ENCODE measurements at regions of chr16 and their contacts with region 1.

Region 1: GRCh38 chr16:10981697-10982216 is 37.4 kb downstream of the CLEC16A start:
- DNase-seq: no peak
- H3K4me3 ChIP-seq: no peak overlapping the region
- H3K27ac ChIP-seq: peak overlapping the region in 1 of 2 donors; percentile 15
- H3K4me1 ChIP-seq: peaks cover 7% of the 10 kb centered on the region
- H3K27me3 ChIP-seq: no peaks in the 10 kb centered on the region
- CTCF ChIP-seq: peak in 1 of 4 experiments; percentile 9
- POLR2A ChIP-seq: no peak

Region 2: DNA sequence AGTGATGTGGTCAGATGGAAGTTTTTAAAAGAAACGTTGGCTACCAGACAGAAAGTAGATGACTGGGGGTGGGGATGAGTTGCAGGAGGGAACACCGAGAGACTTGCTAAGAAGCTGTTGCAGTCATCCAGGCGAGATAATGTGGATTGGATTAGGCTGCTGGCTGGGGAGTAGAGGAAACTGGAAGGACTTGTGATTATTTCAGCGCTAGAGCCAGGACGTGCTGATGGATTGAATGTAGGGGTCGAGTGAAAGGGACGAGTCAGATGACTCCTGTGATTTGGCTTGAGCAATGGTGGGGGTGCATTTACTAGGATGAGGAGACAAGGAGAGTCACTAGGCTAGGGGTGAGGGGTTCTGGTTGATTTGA is 51.1 kb after region 1 on chr16:
- intact Hi-C with region 1: loop called (anchors 5 kb)
- DNase-seq: no peak
- H3K4me3 ChIP-seq: no peak overlapping the region
- H3K27ac ChIP-seq: peak overlapping the region; percentile 27 to 34
- H3K4me1 ChIP-seq: no peaks in the 10 kb centered on the region
- H3K27me3 ChIP-seq: no peaks in the 10 kb centered on the region
- CTCF ChIP-seq: no peak
- POLR2A ChIP-seq: no peak